GM13977 (cell line): ENCODE measurements at regions of chr15 and their contacts with region 1.

Region 1: DNA sequence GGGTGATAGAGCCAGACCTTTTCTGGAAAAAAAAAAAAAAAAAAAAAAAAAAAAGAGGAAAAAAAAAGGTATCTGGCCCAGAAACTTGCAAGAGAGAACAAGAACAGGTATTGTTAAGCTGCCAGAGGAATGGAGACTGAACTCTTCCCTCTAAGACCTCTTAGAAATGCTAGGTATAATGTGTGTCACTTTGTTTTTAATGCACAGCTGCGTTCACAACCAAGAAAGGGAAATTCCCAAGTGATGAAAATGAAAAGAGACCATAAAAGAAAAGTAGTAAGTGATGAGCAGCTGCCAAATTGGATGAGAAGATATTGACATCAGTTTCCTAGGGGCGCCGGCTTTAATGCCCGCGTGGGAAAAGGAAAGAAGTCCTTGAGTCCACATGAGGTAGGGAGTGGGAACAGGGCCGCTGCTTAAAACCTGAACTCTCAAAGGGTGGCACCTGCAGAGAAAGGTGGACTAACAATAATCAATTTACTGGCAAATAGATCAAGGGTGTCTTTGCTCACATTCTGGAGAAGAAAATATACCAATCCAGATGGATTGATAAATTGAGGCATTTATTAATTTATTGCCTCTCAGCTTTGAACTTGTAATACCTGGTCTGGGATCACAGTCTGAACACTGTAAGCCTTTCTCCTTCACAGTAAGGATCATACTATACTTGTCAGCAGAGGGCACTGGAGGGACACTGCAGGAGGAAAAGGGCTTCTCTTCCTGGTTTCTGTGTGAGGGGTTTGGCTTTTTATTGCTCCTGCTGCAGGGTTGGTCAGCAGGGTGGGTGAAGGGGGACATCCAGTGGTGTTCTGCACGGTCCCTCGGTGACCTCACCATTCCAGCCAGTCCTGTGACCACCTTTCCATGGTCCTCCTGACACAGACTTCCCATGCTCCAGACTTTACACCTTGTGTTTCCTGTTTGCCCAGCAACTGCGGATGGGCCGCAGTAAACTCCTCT is 131.6 kb downstream of the AQP9 start:
- DNase-seq: peak; percentile 36
- CTCF ChIP-seq: peak; percentile 69

Region 2: GRCh38 chr15:58124585-58124984 is 145.2 kb before region 1 on chr15:
- in situ Hi-C with region 1: no loop called
- DNase-seq: no peak
- CTCF ChIP-seq: no peak

Region 3: GRCh38 chr15:58770857-58771620 is 501.3 kb after region 1 on chr15 and contains the start of gene MINDY2:
- in situ Hi-C with region 1: loop called (anchors 25 kb)
- DNase-seq: peak; percentile 96
- CTCF ChIP-seq: peak; percentile 49